Ascending aorta (tissue), 2 donors: ENCODE measurements at regions of chr14 and their contacts with region 1.

Region 1: GRCh38 chr14:24114536-24115450 is at the starts of genes DCAF11 and NRL:
- DNase-seq: peak; percentile 97 to 99
- H3K4me3 ChIP-seq: peak within 1 kb of the TSS; percentile 78 to 79
- H3K27ac ChIP-seq: peak within 1 kb of the TSS; percentile 98 to 100
- H3K4me1 ChIP-seq: peaks cover 9 to 16% of the 10 kb centered on the region in 2 donors
- H3K27me3 ChIP-seq: no peaks in the 10 kb centered on the region
- CTCF ChIP-seq: no peak
- total RNA-seq, gene DCAF11: 52.3 TPM
- total RNA-seq, gene NRL: not detected

Region 2: DNA sequence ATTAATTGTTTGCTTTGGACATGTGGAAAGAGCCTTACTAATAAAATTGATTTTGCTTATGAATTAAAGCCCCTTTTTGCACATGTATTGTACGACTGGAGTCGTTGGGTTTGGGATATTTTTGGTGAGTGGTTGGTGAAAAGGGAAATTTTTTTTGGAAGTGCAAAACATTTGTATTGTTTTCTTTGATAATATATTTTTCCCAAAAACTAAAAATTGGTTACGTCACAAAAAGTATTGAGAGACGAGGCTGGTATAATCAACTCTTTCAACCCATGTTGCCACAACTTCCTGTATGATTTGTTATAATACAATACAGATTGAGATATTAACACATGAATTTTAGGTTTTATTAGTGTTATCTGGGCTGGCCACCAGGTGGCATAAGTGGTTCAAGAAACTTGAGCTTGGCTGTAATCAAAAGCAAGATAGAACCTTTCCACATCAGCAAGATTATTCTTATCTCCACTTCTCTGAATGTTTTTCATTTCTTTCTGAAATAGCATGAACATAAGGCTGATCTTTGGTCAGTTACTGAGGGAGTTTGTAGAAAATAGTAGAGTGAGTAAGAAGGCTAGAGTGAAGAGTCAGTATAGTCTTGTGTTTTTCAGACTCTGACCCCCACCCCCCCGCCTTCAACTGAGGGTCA is 636.6 kb before region 1 on chr14:
- intact Hi-C with region 1: loop called (anchors 10 kb)
- DNase-seq: peak in 1 of 2 donors; percentile 73
- H3K4me3 ChIP-seq: no peak overlapping the region
- H3K27ac ChIP-seq: no peak overlapping the region
- H3K4me1 ChIP-seq: no peaks in the 10 kb centered on the region
- H3K27me3 ChIP-seq: no peaks in the 10 kb centered on the region
- CTCF ChIP-seq: peak; percentile 42 to 67 (median 62)

Region 3: GRCh38 chr14:24093901-24094761 is 20.7 kb before region 1 on chr14 and contains the start of gene PCK2:
- intact Hi-C with region 1: loop called (anchors 1 kb)
- DNase-seq: peak; percentile 83 to 97
- H3K4me3 ChIP-seq: peak within 1 kb of the TSS; percentile 72 to 81
- H3K27ac ChIP-seq: peak within 1 kb of the TSS; percentile 92 to 95
- H3K4me1 ChIP-seq: peaks cover 0 to 11% of the 10 kb centered on the region in 2 donors
- H3K27me3 ChIP-seq: no peaks in the 10 kb centered on the region
- CTCF ChIP-seq: peak in 1 of 3 experiments; percentile 24
- total RNA-seq, gene PCK2: 26.1 TPM

Region 4: GRCh38 chr14:24141097-24141880 is 26.5 kb after region 1 on chr14 and contains the start of gene EMC9:
- intact Hi-C with region 1: loop called (anchors 1 kb)
- DNase-seq: peak; percentile 100
- H3K4me3 ChIP-seq: peak within 1 kb of the TSS; percentile 80 to 81
- H3K27ac ChIP-seq: peak within 1 kb of the TSS; percentile 76 to 89
- H3K4me1 ChIP-seq: peaks cover 18 to 39% of the 10 kb centered on the region in 2 donors
- H3K27me3 ChIP-seq: no peaks in the 10 kb centered on the region
- CTCF ChIP-seq: peak; percentile 22 to 74 (median 45)
- total RNA-seq, gene EMC9: 3.4 TPM

Region 5: DNA sequence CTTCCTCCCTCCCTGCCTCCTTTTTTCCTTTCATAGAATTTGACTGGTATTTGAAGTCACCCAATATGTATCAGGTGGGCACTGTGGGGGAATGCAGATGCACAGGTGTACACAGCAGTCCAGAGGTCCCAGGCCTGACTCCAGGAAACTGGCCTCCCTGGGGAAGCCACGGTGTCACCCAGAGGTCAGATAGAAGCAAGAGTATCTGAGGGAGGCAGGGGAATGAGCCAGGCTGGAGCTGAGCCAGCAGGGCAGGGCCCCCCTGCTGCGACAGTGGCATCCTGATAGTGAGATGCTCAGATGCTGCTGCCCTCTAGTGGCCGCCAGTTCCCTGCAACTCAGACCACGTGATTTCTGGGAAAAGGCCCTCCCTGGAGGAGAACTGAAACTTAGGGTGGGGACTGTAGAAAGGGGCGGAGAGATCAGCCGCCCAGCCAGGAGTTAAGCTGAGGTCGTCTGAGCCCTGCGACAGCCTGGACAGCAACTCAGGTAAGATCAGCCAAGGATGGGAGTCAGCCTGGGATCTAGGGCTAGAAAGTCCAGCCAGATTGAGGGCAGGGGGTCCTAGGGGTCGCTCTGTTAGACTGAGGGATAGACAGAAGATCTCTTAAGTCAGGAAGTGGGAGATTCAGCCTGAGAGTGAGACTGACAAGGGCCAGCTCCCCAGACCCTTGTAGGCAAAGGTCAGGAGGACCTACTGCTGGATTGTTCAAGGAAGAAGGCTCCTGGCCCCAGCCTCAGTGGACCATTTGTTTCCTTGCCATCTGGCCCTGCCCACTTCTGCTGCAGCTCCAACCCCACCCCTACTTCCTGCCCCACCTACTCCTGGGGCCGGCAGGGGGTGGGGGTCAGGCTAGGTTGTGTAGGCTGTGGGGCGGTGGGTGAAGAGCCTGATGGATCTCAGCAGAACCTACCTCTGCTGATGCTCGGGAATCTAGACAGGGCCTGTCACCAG is 46.3 kb after region 1 on chr14 and contains the start of gene IRF9:
- intact Hi-C with region 1: loop called (anchors 1 kb)
- DNase-seq: peak; percentile 90 to 99
- H3K4me3 ChIP-seq: peak within 1 kb of the TSS; percentile 65 to 77
- H3K27ac ChIP-seq: peak within 1 kb of the TSS; percentile 85 to 88
- H3K4me1 ChIP-seq: peaks cover 9 to 12% of the 10 kb centered on the region in 2 donors
- H3K27me3 ChIP-seq: no peaks in the 10 kb centered on the region
- CTCF ChIP-seq: peak; percentile 90 to 95 (median 91)
- total RNA-seq, gene IRF9: 24.7 TPM

Region 6: GRCh38 chr14:24196071-24197055 is 81.6 kb after region 1 on chr14:
- intact Hi-C with region 1: no loop called
- DNase-seq: no peak
- H3K4me3 ChIP-seq: peak overlapping the region; percentile 81 to 98
- H3K27ac ChIP-seq: peak overlapping the region; percentile 97 to 99
- H3K4me1 ChIP-seq: peaks cover 8 to 25% of the 10 kb centered on the region in 2 donors
- H3K27me3 ChIP-seq: no peaks in the 10 kb centered on the region
- CTCF ChIP-seq: no peak

Region 7: GRCh38 chr14:24241829-24242443 is 127.1 kb after region 1 on chr14:
- intact Hi-C with region 1: loop called (anchors 2 kb)
- DNase-seq: peak in 1 of 2 donors; percentile 94
- H3K4me3 ChIP-seq: peak overlapping the region; percentile 81 to 95
- H3K27ac ChIP-seq: peak overlapping the region; percentile 94 to 99
- H3K4me1 ChIP-seq: peaks cover 15 to 32% of the 10 kb centered on the region in 2 donors
- H3K27me3 ChIP-seq: no peaks in the 10 kb centered on the region
- CTCF ChIP-seq: peak; percentile 54 to 67 (median 56)

Region 8: DNA sequence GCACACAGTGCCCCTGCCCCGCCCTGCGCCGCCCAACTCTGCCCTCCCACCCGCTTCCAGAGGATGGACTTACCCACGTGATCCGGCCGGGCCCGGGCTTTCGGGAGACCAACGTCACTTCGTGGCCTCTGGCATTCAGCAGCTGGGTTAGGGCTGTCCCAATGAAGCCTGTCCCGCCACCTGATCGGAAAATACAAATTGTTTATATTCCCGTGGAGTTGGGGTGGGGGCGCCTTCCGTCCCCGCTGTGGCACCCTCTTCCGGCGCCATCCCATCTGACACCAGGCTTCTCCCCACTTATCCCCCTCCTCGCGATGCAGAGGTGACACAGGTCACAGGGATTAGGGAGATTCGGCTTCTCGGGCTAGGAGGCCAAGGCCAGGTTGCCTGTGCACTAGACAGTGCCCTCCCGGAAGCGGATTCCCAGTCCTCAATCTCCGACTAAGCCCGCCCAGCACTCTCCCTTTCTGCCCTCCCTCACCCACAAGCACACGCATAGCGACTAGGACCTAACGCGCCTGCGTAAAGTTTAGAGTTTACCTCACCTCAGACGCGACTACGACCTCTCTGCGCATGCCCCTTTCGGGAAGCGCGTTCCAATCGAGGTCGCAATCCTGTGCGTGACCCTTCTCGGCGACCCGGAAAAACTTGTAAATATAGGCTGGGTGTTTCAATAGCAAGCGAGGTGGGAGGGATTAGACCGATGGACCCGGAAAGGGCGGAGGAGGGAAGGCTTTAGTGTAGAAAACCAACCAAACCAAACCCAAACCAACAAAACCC is 327.7 kb after region 1 on chr14 and contains the start of gene SDR39U1:
- intact Hi-C with region 1: loop called (anchors 2 kb)
- DNase-seq: peak; percentile 93 to 99
- H3K4me3 ChIP-seq: peak within 1 kb of the TSS; percentile 84 to 86
- H3K27ac ChIP-seq: peak within 1 kb of the TSS; percentile 100
- H3K4me1 ChIP-seq: peaks cover 0 to 15% of the 10 kb centered on the region in 2 donors
- H3K27me3 ChIP-seq: no peaks in the 10 kb centered on the region
- CTCF ChIP-seq: no peak
- total RNA-seq, gene SDR39U1: 98.3 TPM